GM12878 (cell line): ENCODE measurements at regions of chr3 and their contacts with region 1.

Region 1: DNA sequence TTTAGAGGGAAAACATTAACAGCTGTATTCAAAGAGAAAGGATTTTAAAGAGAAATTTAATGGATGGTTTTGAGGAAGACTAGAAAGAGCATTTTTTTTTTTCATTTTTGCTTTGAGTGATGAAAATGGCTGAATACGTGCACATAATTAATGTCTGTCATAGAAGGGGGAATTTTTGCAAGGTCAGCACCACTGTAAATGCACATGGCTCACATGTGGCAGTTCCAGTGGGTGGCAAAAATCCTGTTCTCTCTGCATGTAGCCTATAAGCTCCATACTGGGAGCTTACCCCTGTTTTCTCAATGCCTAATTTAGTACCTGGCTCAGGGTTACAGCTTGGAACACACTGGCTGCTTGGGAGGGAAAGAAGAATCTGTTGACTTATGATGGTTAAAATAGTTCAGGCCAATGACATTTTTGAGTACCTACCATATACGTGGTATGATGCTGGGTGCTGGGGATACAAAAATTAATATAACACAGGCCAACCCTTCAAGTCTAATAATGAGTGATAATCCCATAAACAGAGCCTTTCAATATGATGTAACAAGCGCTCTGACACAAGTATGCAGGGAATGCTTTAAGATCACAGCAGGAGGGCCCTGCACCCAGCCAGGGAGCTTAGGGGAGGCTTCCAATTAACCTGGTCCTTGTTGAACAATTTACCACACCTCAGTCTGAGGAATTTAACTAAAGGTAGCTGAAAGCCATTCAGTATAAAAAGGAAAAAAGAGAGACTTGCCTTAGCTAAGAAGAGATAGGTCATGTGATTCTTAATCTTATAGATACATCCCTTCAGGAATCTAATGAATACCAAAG is 33.0 kb downstream of the HSPBAP1 start:
- DNase-seq: no peak
- ATAC-seq: no peak
- H3K4me3 ChIP-seq: no peak overlapping the region
- H3K27ac ChIP-seq: no peak overlapping the region
- H3K4me1 ChIP-seq: no peaks in the 10 kb centered on the region
- H3K27me3 ChIP-seq: no peaks in the 10 kb centered on the region
- CTCF ChIP-seq: no peak
- EP300 ChIP-seq: no peak
- POLR2A ChIP-seq: no peak
- RAD21 ChIP-seq: no peak

Region 2: DNA sequence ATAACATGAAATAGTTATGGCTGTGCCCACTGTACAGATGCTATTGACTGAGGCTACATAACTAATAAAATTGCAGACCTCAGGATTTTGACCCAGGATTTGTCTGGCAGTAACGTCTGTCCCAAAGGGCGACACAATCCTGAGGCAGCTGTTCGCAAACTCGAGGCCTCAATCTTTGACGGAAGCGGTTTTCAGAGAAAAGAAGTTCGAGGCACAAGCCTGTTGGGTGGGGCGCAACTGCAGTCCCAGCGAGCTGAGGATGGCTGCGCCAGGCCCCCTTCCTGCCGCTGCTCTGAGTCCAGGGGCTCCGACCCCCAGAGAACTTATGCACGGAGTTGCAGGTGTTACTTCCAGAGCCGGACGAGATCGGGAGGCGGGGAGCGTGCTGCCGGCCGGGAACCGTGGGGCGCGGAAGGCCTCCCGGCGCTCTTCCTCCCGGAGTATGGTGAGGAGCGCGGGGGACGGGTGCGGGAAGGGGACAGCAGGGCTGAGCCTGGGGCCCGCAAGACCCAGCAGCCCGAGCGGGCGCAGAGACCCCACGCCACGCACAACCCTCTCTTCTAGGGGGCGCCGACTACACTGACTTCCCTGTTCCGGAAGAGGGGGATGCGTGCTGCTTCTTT is 183.1 kb before region 1 on chr3 and contains the start of gene PARP15:
- CTCF ChIA-PET with region 1: no interaction called
- POLR2A ChIA-PET with region 1: no interaction called
- RAD21 ChIA-PET with region 1: no interaction called
- SMC1A ChIA-PET with region 1: no interaction called
- in situ Hi-C with region 1: no loop called
- intact Hi-C with region 1: no loop called
- DNase-seq: no peak
- ATAC-seq: peak; percentile 32
- H3K4me3 ChIP-seq: peak within 1 kb of the TSS; percentile 54
- H3K27ac ChIP-seq: peak within 1 kb of the TSS; percentile 95
- H3K4me1 ChIP-seq: peaks cover 29% of the 10 kb centered on the region
- H3K27me3 ChIP-seq: no peaks in the 10 kb centered on the region
- CTCF ChIP-seq: peak in 2 of 3 experiments; percentile 6 to 15; a peak in 1 of 6 replicates
- EP300 ChIP-seq: peak in 1 of 2 experiments; percentile 4; a peak in 1 of 4 replicates
- POLR2A ChIP-seq: peak; percentile 81
- RAD21 ChIP-seq: 0 out of 2 replicates have a peak, but pooled peaks have one; percentile 7
- polyA plus RNA-seq, gene PARP15: 9.0 to 9.7 TPM

Region 3: GRCh38 chr3:122745346-122746021 is 15.2 kb before region 1 on chr3:
- CTCF ChIA-PET with region 1: interaction called, 14 read pairs
- POLR2A ChIA-PET with region 1: interaction called, 3 read pairs
- RAD21 ChIA-PET with region 1: interaction called, 5 read pairs
- SMC1A ChIA-PET with region 1: interaction called, 5 read pairs
- in situ Hi-C with region 1: no loop called
- intact Hi-C with region 1: no loop called
- DNase-seq: no peak
- ATAC-seq: no peak
- H3K4me3 ChIP-seq: no peak overlapping the region
- H3K27ac ChIP-seq: no peak overlapping the region
- H3K4me1 ChIP-seq: no peaks in the 10 kb centered on the region
- H3K27me3 ChIP-seq: no peaks in the 10 kb centered on the region
- CTCF ChIP-seq: no peak
- EP300 ChIP-seq: no peak
- POLR2A ChIP-seq: no peak
- RAD21 ChIP-seq: no peak

Region 4: GRCh38 chr3:122774564-122774963 is 13.9 kb after region 1 on chr3:
- CTCF ChIA-PET with region 1: interaction called, 23 read pairs
- POLR2A ChIA-PET with region 1: interaction called, 4 read pairs
- RAD21 ChIA-PET with region 1: interaction called, 10 read pairs
- SMC1A ChIA-PET with region 1: interaction called, 10 read pairs
- in situ Hi-C with region 1: no loop called
- intact Hi-C with region 1: no loop called
- DNase-seq: no peak
- ATAC-seq: peak; percentile 32
- H3K4me3 ChIP-seq: no peak overlapping the region
- H3K27ac ChIP-seq: peak overlapping the region; percentile 63
- H3K4me1 ChIP-seq: peaks cover 16% of the 10 kb centered on the region
- H3K27me3 ChIP-seq: no peaks in the 10 kb centered on the region
- CTCF ChIP-seq: no peak
- EP300 ChIP-seq: no peak
- POLR2A ChIP-seq: no peak
- RAD21 ChIP-seq: no peak